PC-9 (cell line): ENCODE measurements at regions of chr3 and their contacts with region 1.

Region 1: DNA sequence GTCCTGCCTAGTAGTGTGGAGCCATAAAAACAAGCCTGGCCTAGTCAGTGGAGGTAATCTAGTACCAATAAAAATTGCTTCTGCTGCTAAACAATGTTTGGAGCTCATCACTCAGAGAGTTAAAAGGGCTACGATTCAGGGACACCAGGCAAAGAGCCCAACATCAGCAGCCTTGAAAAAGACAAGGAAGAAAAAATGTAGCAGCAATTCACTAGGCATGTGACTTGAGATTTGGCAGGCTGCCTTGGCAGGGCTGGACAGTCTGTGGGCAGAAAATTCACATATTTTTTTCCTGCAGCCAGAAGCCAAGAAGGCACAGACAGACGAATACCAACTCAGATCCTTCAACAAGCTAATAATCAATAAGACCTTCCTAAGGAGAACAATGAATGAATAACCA is 47.2 kb downstream of the IGSF11 start:
- DNase-seq: peak in 1 of 2 experiments; percentile 3
- H3K4me3 ChIP-seq: no peak overlapping the region
- H3K27ac ChIP-seq: no peak overlapping the region
- H3K4me1 ChIP-seq: no peaks in the 10 kb centered on the region
- H3K27me3 ChIP-seq: no peaks in the 10 kb centered on the region
- CTCF ChIP-seq: no peak

Region 2: DNA sequence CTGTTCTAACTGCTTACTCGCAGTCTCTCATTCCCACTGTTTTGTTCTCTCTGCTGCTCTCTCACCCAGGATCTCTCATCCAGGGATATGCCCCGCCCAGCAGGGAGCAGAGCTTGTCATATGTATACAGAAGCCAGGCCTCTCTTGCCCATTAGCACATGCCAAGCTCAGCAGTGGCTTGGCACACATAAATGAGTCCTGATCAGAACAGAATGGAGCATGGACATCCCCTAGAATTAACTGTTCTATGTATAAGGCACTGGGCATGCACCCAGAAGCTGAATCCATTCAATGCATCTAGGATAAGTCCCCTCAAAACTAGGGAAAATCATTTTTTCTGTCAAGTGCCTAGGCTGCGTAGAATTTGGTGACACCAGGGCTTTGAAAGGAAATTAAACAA is 14.4 kb before region 1 on chr3:
- CTCF ChIA-PET with region 1: no interaction called
- POLR2A ChIA-PET with region 1: interaction called, 17 read pairs
- intact Hi-C with region 1: no loop called
- DNase-seq: no peak
- H3K4me3 ChIP-seq: no peak overlapping the region
- H3K27ac ChIP-seq: no peak overlapping the region
- H3K4me1 ChIP-seq: no peaks in the 10 kb centered on the region
- H3K27me3 ChIP-seq: no peaks in the 10 kb centered on the region
- CTCF ChIP-seq: no peak